ENCODE measurements at regions of chr5 and their contacts with region 1.

Region 1: DNA sequence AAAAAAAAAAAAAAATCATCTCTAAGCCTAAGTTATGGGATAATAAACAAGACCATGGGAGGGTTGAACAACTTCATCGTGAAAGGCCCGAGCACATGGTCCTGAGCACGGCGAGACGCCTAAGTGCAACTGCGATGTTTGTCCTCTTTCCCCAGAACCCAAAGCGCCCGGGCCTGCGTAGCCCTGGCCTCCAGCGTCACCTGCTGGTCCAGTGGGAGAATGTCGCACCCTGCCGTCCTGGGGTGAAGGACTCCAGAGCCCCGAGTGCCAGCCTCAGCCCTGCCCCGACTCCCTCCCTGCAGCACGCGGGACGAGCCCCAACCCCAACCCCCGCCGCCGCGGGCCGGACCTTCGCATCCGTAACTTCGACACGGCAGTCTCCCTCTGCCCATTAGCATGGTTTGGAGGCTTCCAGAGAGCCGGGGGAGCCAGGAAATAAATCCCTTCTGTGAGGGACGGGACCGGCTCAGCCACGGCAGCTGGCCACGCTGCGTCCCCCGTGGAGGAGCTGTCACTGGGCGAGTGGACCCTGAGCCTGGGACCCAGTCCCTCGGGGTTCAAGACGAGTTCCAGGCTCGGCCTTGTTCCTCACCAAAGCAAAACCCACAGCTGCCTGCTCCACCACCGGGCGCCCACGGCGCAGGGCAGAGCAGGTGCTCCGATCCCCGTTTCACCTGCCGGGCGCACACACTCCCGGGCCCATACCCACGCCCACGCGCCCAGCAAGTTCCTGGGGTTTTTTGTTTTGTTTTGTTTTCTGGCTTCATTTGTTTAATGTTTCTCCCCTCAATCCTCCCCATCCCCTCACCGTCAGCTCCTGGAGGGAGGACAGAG is 132.5 kb upstream of the HAND1 start:
- DNase-seq: peak; percentile 27
- ATAC-seq: peak; percentile 98
- H3K4me3 ChIP-seq: peak overlapping the region; percentile 72; the same call in 1 of the 2 replicates
- H3K27ac ChIP-seq: no peak overlapping the region
- H3K4me1 ChIP-seq: peaks cover 12% of the 10 kb centered on the region
- H3K27me3 ChIP-seq: peaks cover 4 to 7% of the 10 kb centered on the region in 2 experiments; a peak in 3 of 4 replicates
- CTCF ChIP-seq: peak; percentile 91 to 99 (median 96); a peak in 5 of 6 replicates
- EP300 ChIP-seq: no peak
- POLR2A ChIP-seq: no peak
- RAD21 ChIP-seq: peak; percentile 99

Region 2: GRCh38 chr5:154421868-154422267 is 188.7 kb before region 1 on chr5:
- CTCF ChIA-PET with region 1: interaction called, 6 read pairs
- POLR2A ChIA-PET with region 1: no interaction called
- RAD21 ChIA-PET with region 1: no interaction called
- SMC1A ChIA-PET with region 1: interaction called, 3 read pairs
- in situ Hi-C with region 1: no loop called
- intact Hi-C with region 1: loop called (anchors 2 kb)
- DNase-seq: no peak
- ATAC-seq: peak; percentile 86
- H3K4me3 ChIP-seq: no peak overlapping the region
- H3K27ac ChIP-seq: no peak overlapping the region
- H3K4me1 ChIP-seq: peaks cover 2% of the 10 kb centered on the region; the same call in 1 of the 2 replicates
- H3K27me3 ChIP-seq: no peaks in the 10 kb centered on the region
- CTCF ChIP-seq: peak; percentile 53 to 64 (median 56)
- EP300 ChIP-seq: no peak
- POLR2A ChIP-seq: no peak
- RAD21 ChIP-seq: peak; percentile 56

Region 3: DNA sequence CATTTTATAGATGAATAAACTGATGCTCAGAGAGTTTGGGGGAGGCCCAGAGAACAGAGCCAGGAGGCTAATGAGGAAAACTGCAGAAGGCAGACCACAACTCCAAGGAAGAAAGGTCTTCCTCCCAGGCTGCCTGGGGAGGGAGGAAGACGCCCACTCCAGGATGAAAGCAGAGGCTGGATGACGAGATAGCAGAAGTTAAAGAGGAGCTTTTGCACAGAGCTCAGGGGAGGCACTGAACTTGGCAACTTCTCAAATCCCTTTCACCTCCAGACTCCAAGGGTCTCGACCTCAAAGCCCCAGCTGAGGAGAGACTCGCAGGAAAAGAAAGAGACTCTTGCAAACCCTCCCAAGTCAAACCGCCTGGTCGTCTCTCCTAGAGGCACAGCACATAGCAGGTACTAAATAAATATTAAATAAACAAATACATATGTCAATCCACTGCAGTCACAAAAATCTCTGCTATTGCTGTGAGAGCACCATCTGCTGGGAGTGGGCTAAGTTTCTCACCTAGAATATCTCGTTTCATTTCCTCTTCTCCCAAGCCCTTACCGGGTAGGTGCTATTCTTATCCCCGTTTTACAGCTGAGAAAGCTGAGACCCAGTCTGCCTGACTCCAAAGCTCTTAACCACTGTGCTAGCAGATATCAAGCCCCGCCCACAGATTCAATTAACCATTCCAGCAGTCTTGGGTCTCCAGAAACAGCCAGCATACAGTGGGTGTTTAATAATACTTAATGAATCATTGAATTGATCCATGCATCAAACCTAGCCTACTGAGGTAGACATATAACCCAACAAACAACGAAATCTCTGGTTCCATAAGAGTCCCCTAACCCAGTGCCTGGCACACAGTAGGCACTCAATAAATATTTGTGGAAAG is 34.8 kb before region 1 on chr5:
- CTCF ChIA-PET with region 1: interaction called, 9 read pairs
- POLR2A ChIA-PET with region 1: no interaction called
- RAD21 ChIA-PET with region 1: interaction called, 3 read pairs
- SMC1A ChIA-PET with region 1: no interaction called
- in situ Hi-C with region 1: no loop called
- intact Hi-C with region 1: loop called (anchors 1 kb)
- DNase-seq: peak; percentile 66
- ATAC-seq: peak; percentile 97
- H3K4me3 ChIP-seq: no peak overlapping the region
- H3K27ac ChIP-seq: no peak overlapping the region
- H3K4me1 ChIP-seq: peaks cover 16% of the 10 kb centered on the region
- H3K27me3 ChIP-seq: no peaks in the 10 kb centered on the region
- CTCF ChIP-seq: peak; percentile 60 to 67 (median 64)
- EP300 ChIP-seq: no peak
- POLR2A ChIP-seq: no peak
- RAD21 ChIP-seq: peak; percentile 74